Adrenal gland (tissue), 19 donors: ENCODE measurements at regions of chr5 and their contacts with region 1.

Region 1: DNA sequence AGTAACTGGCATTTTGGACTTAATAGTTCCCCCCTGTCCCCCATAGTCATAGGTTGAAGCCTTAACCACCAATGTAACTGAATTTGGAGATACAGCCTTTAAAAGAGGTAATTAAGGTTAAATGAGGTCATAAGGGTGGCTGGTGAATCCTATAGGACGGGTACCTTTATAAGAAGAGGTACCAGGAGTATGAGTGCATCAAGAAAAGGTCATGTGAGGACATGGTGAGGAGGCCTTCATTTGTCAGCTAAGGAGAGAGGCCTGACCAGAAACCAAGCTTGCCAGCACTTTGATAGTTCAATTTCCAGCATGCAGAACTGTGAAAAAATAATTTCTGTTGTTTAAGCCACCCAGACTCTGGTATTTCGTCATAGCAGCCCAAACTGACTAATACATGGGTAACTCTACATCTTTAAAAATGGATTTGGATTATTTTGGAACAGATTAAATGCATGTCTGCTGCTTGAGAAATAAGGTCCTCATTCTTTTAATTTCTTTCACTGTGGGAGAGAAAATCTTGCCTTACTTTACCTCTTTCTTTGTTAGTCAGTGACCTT is 9.7 kb downstream of the RASA1 start:
- DNase-seq: no peak
- H3K4me3 ChIP-seq: no peak overlapping the region
- H3K27ac ChIP-seq: no peak overlapping the region
- H3K4me1 ChIP-seq: peaks cover 0 to 5% of the 10 kb centered on the region in 2 donors
- H3K27me3 ChIP-seq: no peaks in the 10 kb centered on the region
- CTCF ChIP-seq: no peak
- POLR2A ChIP-seq: no peak

Region 2: DNA sequence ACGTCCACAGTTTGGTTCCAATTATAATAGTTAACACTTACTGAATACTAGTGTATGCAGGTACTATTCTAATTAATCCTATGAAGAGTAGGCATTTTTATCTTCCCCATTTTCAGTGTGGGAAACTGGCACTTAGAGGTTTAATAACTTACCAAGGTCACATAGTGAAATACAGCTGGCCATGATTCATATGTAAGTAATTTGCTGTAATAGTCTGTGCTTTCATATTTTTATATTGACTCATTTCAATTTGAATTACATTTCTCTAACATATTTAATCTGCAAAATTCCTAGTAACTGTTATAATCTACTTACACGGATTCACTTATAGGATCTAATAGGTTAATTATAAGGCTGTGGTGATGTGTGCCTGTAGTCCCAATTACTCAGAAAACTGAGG is 116.0 kb after region 1 on chr5:
- intact Hi-C with region 1: loop called in 1 of 2 experiments (anchors 10 kb)
- DNase-seq: no peak
- H3K4me3 ChIP-seq: no peak overlapping the region
- H3K27ac ChIP-seq: peak overlapping the region in 4 of 5 donors; percentile 49 to 79 (median 63)
- H3K4me1 ChIP-seq: peaks cover 19 to 33% of the 10 kb centered on the region in 2 donors
- H3K27me3 ChIP-seq: no peaks in the 10 kb centered on the region
- CTCF ChIP-seq: no peak
- POLR2A ChIP-seq: no peak